Calu3 (cell line): ENCODE measurements at regions of chr5 and their contacts with region 1.

Region 1: DNA sequence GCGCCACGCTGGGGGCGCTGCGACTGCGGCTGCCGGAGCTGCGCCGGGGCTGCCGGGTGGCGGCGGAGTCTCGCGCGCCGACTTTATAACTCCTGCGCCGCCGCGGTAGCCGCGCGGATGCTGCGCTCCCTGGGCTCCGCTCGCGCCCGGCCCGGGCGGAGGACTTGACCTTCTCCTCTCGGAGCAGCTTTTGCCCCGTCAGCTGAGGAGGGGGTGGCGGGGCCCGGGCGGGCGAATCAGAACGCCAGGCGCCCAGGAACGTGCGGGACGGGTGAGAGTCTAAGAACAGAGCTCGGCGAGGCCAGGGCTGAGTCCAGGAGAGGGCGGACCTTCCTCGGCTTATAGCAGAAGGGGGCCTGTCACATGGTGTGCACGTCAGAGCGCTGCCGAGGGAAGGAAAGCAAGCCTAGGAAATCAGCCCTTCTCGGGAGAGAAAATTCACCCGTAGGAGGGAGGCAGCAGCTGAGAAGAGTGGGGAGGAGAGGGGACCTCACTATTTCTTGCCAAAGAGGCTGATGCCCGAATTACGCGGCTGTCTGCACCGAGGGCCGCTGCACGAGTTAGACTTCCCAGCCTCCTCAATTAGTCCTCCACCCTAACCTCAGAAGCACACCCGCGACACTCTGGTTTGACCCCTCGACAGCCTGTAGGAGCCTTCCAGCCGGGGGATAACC is at the start of gene FOXD1:
- DNase-seq: peak; percentile 89
- H3K4me3 Mint-ChIP-seq: peak within 1 kb of the TSS; percentile 83
- H3K27ac Mint-ChIP-seq: peak within 1 kb of the TSS; percentile 49
- H3K4me1 Mint-ChIP-seq: peaks cover 10% of the 10 kb centered on the region
- H3K27me3 Mint-ChIP-seq: peaks cover 40% of the 10 kb centered on the region
- CTCF ChIP-seq: no peak
- total RNA-seq, gene FOXD1: 6.4 and 7.8 TPM in 2 replicates

Region 2: DNA sequence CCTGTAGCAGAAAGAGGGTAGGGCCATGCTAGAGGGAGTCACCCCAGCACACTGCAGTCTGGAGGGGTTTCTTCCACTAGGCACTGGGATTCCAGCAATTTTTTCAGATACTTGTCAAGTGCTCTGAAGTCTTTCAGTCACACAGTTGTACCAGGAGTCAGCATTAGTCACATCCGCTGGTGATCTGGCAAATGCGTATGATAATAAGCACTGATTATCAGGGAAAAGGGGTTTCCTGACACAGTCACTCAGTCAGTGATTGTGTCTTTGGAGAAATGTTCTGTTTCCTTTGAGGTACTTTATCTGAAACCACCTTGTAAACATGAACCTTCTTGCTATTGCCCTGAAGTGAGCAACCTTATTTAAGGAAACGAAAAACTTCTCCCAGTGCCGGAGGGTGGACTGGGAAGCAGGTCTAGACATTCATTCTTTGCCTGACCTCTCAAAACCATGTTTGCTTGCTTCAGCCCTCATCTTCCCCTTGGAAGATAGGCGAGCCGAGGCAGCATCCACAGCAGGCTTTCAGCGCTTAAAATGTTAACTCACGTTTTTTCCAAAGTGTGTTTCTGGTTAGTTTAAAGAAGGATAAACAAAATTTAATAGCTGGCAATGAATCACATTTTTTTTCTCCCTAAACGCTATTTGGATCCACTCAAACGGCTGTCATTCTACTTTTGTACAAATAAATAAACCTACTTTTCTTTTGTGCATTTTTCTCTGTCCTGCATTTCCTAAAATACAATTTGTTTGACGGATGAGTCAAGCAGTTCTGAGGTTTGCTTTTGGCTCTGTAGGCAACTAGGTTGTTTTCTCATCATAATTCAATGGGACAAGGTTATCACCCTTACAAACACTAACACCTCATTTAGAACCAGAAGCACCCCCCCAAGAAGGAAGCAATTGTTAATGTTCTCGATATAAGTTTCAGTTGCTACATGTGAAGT is 77.7 kb before region 1 on chr5:
- CTCF ChIA-PET with region 1: no interaction called
- intact Hi-C with region 1: loop called (anchors 5 kb)
- DNase-seq: peak; percentile 61
- H3K4me3 Mint-ChIP-seq: peak overlapping the region; percentile 33
- H3K27ac Mint-ChIP-seq: peak overlapping the region; percentile 61
- H3K4me1 Mint-ChIP-seq: peaks cover 23% of the 10 kb centered on the region
- H3K27me3 Mint-ChIP-seq: no peaks in the 10 kb centered on the region
- CTCF ChIP-seq: no peak